Activated CD4-positive, alpha-beta memory T cell treated with anti-CD3 and anti-CD28 coated beads for 36 hours (primary cell): ENCODE measurements at regions of chr1 and their contacts with region 1.

Region 1: DNA sequence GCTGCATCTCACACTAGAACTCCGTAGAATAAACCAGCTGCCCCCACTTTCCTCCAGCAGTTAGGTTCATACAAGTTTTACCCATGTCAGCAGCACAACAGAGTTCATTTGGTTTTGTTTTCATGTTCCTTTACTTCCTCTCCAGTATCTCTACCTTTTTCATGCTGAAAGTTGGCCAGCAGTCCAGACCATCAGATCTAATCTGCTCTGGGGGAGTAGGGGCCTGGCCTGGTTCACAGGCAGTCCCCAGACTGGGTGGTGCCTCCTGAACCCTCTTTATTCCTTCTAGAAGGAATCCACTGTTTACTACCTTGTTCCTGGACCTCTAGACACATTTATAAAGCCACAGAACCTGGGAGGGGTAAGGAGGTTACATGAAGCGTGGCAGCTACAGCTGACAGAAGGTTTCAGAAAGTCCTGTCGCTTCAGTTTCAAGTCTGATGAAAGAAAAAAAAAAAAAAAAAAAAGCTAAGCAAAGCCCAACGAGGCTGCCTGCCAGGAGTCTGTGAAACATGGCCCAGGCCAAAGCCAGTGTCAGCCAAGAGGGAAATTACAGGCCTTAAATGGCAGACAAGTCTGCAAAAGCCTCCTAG is 184.6 kb upstream of the JUN start:
- DNase-seq: peak; percentile 36
- H3K4me3 Mint-ChIP-seq: peak overlapping the region; percentile 34
- H3K27ac Mint-ChIP-seq: peak overlapping the region; percentile 87
- H3K4me1 Mint-ChIP-seq: peaks cover 25% of the 10 kb centered on the region
- H3K27me3 Mint-ChIP-seq: no peaks in the 10 kb centered on the region

Region 2: GRCh38 chr1:58710190-58711085 is 258.0 kb before region 1 on chr1:
- CTCF ChIA-PET with region 1: no interaction called
- POLR2A ChIA-PET with region 1: no interaction called
- intact Hi-C with region 1: no loop called
- DNase-seq: no peak
- H3K4me3 Mint-ChIP-seq: no peak overlapping the region
- H3K27ac Mint-ChIP-seq: no peak overlapping the region
- H3K4me1 Mint-ChIP-seq: no peaks in the 10 kb centered on the region
- H3K27me3 Mint-ChIP-seq: no peaks in the 10 kb centered on the region

Region 3: DNA sequence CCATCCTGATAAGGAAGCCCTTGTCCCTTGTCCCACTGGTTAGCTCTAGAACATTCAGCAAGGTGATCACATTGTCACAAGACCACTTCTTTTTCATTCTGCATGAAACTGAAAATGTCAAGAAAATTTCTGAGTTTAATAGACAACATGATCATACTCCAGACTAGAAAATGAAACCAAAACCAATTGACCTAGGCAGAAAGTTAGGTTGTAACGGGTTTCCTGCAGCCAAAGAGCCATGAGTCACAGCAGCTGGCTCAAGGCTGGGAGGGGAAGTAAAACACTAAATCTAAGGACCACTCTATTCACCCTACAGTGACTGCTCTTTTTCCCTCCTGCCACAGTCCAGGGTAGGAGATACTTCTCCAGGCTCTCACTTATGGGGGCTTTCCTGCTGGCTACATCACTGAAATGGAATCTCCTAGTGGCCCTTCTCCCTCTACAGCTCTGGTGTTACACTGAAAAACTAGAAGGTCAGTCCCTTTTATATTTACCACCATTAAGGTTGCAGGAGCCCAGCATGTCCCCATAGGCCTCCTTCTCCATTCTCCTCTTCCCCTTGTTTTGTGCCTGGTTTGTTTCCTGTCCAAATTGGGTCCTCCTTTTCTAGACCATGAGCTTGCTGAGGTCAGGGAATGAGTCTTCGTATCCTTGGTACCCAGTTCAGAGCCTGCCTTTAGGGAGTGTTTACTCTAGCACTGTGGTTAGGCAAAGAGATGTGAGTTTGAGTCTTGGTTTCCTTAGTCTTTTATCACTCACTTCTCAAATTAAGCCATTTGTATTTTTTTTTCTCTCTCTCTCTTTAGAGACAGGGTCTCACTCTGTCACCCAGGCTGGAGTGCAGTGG is 51.9 kb after region 1 on chr1:
- CTCF ChIA-PET with region 1: no interaction called
- POLR2A ChIA-PET with region 1: no interaction called
- intact Hi-C with region 1: loop called (anchors 1 kb)
- DNase-seq: peak; percentile 67
- H3K4me3 Mint-ChIP-seq: peak overlapping the region; percentile 46
- H3K27ac Mint-ChIP-seq: peak overlapping the region; percentile 87
- H3K4me1 Mint-ChIP-seq: peaks cover 25% of the 10 kb centered on the region
- H3K27me3 Mint-ChIP-seq: no peaks in the 10 kb centered on the region

Region 4: GRCh38 chr1:59198564-59198963 is 230.1 kb after region 1 on chr1:
- CTCF ChIA-PET with region 1: no interaction called
- POLR2A ChIA-PET with region 1: no interaction called
- intact Hi-C with region 1: no loop called
- DNase-seq: no peak
- H3K4me3 Mint-ChIP-seq: no peak overlapping the region
- H3K27ac Mint-ChIP-seq: no peak overlapping the region
- H3K4me1 Mint-ChIP-seq: no peaks in the 10 kb centered on the region
- H3K27me3 Mint-ChIP-seq: peaks cover 6% of the 10 kb centered on the region